Activated T-helper 1 cell treated with anti-CD3 and anti-CD28 coated beads, Interleukin-12 subunit alpha, Interleukin-12 subunit beta, Interleukin-2, Interleukin-4 antibody, amounts not matched to agents 30 ng/mL and 10 ng/mL and 1 ng/mL, durations not matched to agents 14 hours and 24 hours and 36 hours (primary cell): ENCODE measurements at regions of chr2 and their contacts with region 1.

Region 1: DNA sequence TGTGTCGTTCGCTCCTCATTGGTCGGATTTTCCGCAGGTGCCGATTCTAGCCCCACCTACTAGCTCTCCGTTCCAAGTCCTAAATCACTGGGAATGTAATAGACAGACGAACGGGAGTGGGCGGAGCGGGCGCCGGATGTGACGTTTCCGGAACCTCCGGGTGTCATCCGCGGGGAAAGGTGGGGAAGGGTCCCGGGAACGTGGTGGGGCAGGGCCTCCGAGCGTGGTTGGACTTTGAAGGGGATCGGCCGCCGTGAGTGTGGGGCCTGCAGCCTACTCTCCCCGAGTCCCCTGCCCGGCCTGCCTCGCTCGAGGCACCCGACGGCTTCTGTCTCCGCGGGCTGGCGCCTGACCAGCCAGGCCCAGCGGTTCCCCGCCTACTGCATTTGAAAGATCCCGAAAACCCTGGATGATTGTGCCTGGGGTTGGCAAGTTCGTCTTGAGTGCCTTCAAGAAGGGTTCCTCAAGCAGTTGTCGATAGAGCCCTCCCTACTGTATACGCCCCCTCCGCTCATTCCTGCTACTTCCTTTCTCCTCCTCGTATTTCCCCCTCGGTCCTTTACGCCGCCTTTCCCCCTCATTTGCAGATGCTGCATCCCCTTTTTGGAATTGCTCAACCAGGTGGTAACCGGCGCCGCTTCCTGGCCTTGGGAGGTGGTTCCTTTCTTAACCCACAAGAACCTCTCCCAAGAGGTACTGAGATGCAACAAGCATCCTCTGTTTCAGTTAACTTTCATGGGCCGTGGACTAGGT is at the start of gene STAMBP:
- DNase-seq: peak; percentile 90
- H3K4me3 Mint-ChIP-seq: peak within 1 kb of the TSS; percentile 98
- H3K27ac Mint-ChIP-seq: peak within 1 kb of the TSS; percentile 99
- H3K4me1 Mint-ChIP-seq: peaks cover 59% of the 10 kb centered on the region
- H3K27me3 Mint-ChIP-seq: peaks cover 5% of the 10 kb centered on the region
- total RNA-seq, gene STAMBP: 50.8 and 56.0 TPM in 2 replicates

Region 2: DNA sequence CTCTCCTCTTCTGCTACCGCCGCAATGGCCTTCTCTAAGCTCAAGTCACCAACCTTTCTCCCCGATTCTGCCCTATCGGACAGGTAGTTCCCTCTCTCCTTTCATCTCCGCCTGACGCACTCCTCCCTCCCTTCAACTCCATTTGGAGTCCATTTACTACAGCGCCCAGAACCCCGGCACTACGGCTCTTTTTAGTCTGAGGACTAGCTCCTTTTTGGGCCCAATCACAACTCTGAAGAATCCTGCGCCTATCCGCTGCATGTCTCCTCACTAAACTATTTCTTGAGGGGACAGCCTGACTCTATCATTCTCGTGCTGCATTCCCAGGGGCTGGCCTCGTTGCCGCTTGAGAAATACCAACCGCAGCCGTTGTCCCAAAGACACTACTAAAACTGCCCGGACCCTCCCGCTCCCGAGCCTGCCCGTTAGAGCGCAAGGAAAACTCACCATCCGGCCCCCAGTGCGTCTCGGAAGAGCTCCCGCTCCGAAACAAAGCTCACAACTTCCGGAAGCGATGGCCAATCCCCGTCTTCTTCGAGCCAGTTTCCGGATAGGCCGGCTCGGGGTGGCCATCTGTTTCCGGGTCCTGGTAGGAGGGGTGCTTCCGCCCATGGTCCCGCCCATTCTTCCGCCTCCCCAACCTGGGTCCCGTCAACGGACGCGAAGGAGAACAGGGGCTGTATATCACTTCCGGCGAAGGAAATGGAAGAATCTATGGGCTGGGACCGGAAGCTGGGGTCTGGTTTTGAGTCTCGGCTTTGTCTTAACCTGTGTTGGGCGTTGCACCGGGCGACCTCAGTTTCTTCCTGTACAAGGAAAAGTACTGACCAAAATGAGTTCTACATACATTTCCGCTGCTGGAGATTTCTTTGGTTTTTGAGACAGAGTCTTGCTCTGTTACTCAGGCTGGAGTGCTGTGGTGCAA is 91.9 kb before region 1 on chr2 and contains the start of gene TPRKB:
- intact Hi-C with region 1: loop called (anchors 1 kb)
- DNase-seq: peak; percentile 94
- H3K4me3 Mint-ChIP-seq: peak within 1 kb of the TSS; percentile 97
- H3K27ac Mint-ChIP-seq: peak within 1 kb of the TSS; percentile 88
- H3K4me1 Mint-ChIP-seq: peaks cover 18% of the 10 kb centered on the region
- H3K27me3 Mint-ChIP-seq: peaks cover 3% of the 10 kb centered on the region
- total RNA-seq, gene TPRKB: 41.5 and 42.7 TPM in 2 replicates

Region 3: GRCh38 chr2:73859721-73860586 is 31.0 kb after region 1 on chr2:
- intact Hi-C with region 1: loop called (anchors 1 kb)
- DNase-seq: no peak
- H3K4me3 Mint-ChIP-seq: no peak overlapping the region
- H3K27ac Mint-ChIP-seq: peak overlapping the region; percentile 56
- H3K4me1 Mint-ChIP-seq: peaks cover 48% of the 10 kb centered on the region
- H3K27me3 Mint-ChIP-seq: no peaks in the 10 kb centered on the region

Region 4: GRCh38 chr2:73931531-73932500 is 102.8 kb after region 1 on chr2:
- intact Hi-C with region 1: loop called (anchors 1 kb)
- DNase-seq: peak; percentile 22
- H3K4me3 Mint-ChIP-seq: peak overlapping the region; percentile 35
- H3K27ac Mint-ChIP-seq: peak overlapping the region; percentile 82
- H3K4me1 Mint-ChIP-seq: peaks cover 63% of the 10 kb centered on the region
- H3K27me3 Mint-ChIP-seq: no peaks in the 10 kb centered on the region

Region 5: DNA sequence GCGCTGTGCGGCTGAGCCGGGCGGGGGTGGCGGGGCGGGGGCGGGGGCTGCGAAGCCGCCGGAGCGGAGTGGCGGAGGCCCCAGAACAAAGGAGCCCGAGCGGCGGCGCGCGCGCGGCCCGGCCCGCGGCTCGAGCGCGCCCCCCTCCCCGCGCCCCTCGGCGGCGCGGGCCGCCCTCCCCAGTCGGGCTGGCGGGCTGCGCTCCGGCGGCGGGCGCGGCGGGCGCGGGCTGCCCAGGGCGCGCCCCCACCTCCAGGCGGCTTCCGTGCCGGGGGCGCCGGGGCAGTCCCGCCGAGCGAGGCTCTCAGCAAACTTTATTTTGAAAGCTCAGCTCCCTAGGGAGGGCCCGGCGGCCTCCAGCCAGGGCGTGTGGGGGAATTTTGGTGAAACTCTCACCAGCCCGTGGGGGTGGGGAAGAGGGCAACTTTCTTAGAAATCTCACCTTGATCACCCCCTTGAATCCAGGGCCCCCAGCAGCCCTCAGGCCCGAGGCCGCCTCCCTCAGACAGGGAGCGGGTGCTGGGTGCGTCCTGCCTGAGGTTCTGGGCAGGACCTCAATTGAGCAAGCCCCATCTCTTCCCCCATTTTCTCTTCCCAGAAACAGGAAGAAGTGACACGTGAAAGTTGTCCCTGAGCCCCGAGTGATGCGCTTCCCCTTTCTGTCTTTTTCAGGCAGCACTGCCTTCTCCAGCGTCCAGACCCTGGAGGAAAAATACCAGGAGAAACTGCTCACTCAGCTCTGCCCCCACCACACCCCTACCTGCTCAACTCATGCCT is 156.5 kb after region 1 on chr2:
- intact Hi-C with region 1: loop called (anchors 1 kb)
- DNase-seq: no peak
- H3K4me3 Mint-ChIP-seq: peak overlapping the region; percentile 81
- H3K27ac Mint-ChIP-seq: peak overlapping the region; percentile 91
- H3K4me1 Mint-ChIP-seq: peaks cover 81% of the 10 kb centered on the region
- H3K27me3 Mint-ChIP-seq: peaks cover 29% of the 10 kb centered on the region

Region 6: DNA sequence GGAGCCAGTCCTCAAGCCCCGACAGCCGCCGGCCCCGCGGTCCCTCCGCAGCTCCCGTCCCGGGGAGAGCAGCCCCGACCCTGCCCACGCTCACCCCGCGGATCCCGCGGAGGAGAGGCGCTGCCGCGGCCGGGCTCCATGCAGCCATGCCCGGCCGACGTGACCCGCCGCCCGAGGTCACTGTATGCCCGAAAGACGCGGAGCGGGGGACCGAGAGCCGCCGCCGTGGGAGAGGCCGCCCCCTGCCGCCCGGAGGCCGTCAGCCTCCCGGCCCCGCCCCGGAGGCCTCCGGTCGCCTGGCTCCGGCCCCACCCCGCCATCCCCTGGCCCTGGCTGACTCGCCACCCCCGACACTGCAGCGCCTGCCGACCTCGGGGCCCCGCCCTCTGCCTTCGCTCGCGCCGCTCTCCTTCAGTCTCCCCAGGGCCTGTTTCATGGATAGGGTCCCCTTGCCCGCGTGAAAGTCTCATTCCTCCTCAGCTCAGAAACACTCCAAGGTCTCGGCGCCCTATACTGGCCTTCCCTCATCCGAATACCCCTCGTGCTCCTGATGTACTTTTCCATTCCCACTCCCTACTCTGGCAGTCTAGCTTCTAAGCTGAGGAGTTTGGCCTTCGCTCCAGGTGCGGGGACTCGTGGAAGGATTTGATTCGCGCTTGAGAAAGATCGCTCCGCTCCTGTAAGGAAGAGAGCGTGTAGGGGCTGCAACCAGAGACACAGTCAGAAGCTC is 318.9 kb after region 1 on chr2 and contains the start of gene BOLA3:
- intact Hi-C with region 1: loop called (anchors 1 kb)
- DNase-seq: peak; percentile 82
- H3K4me3 Mint-ChIP-seq: no peak within 1 kb of the TSS
- H3K27ac Mint-ChIP-seq: no peak within 1 kb of the TSS
- H3K4me1 Mint-ChIP-seq: peaks cover under 1% of the 10 kb centered on the region
- H3K27me3 Mint-ChIP-seq: no peaks in the 10 kb centered on the region
- total RNA-seq, gene BOLA3: 94.2 and 98.2 TPM in 2 replicates

Region 7: GRCh38 chr2:74267068-74267467 is 438.1 kb after region 1 on chr2:
- intact Hi-C with region 1: no loop called
- DNase-seq: peak; percentile 43
- H3K4me3 Mint-ChIP-seq: no peak overlapping the region
- H3K27ac Mint-ChIP-seq: peak overlapping the region; percentile 23
- H3K4me1 Mint-ChIP-seq: peaks cover 13% of the 10 kb centered on the region
- H3K27me3 Mint-ChIP-seq: peaks cover 2% of the 10 kb centered on the region

Region 8: DNA sequence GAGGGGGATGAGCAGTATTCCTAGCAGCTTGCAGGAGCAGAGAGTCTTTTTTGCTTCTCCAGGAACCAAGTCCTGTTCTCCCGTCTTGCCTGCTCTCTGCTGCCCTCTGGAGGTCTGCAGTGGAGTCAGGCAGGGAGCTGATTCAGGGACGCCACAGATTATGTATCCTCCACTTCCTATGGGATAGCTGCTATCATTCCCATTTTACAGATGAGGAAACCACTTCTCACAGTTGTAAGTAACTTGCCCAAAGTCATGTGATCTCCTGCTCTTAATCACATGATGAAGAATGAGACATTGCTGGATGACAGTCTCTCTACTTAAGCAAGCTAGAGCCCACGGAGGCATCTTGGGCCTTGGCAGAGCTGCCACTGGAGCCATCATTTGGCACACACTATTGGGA is 505.9 kb after region 1 on chr2:
- intact Hi-C with region 1: loop called (anchors 1 kb)
- DNase-seq: peak; percentile 57
- H3K4me3 Mint-ChIP-seq: no peak overlapping the region
- H3K27ac Mint-ChIP-seq: no peak overlapping the region
- H3K4me1 Mint-ChIP-seq: no peaks in the 10 kb centered on the region
- H3K27me3 Mint-ChIP-seq: peaks cover 2% of the 10 kb centered on the region